CD14-positive monocyte (primary cell): ENCODE measurements at regions of chr3 and their contacts with region 1.

Region 1: GRCh38 chr3:157417247-157417646 is 19.4 kb upstream of the PTX3 start:
- DNase-seq: no peak
- H3K4me3 ChIP-seq: no peak overlapping the region
- H3K4me3 Mint-ChIP-seq: no peak overlapping the region
- H3K27ac ChIP-seq: no peak overlapping the region
- H3K27ac Mint-ChIP-seq: no peak overlapping the region
- H3K4me1 ChIP-seq: no peaks in the 10 kb centered on the region
- H3K4me1 Mint-ChIP-seq: no peaks in the 10 kb centered on the region
- H3K27me3 ChIP-seq: peaks cover 0 to 2% of the 10 kb centered on the region in 2 donors
- H3K27me3 Mint-ChIP-seq: peaks cover 2 to 5% (median 2%) of the 10 kb centered on the region in 3 donors
- CTCF ChIP-seq: no peak

Region 2: DNA sequence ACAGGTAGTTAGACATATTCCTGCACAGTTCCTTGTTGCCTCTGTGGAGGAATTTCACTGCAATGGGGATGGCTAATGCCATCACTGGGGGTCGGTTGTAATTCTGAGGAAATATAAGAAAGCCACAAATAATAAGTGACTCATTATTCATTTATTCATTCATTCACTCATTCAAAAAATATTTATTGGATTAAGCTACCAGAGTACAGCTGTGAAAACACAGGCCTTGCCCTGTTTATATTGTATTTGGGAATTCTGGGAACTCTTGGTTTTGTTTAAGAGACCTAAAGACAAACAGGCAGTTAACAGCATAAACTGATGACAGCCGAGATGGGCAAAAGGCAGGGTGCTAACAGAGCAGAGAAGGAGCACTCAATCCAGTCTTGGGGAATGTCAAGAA is 43.0 kb after region 1 on chr3:
- intact Hi-C with region 1: loop called in 1 of 2 experiments (anchors 10 kb)
- DNase-seq: no peak
- H3K4me3 ChIP-seq: no peak overlapping the region
- H3K4me3 Mint-ChIP-seq: no peak overlapping the region
- H3K27ac ChIP-seq: no peak overlapping the region
- H3K27ac Mint-ChIP-seq: no peak overlapping the region
- H3K4me1 ChIP-seq: no peaks in the 10 kb centered on the region
- H3K4me1 Mint-ChIP-seq: no peaks in the 10 kb centered on the region
- H3K27me3 ChIP-seq: no peaks in the 10 kb centered on the region
- H3K27me3 Mint-ChIP-seq: peaks cover 0 to 3% (median 3%) of the 10 kb centered on the region in 3 donors
- CTCF ChIP-seq: no peak